Caco-2 (cell line): ENCODE measurements at regions of chr2 and their contacts with region 1.

Region 1: GRCh38 chr2:220057916-220058315 is 430.5 kb downstream of the SLC4A3 start:
- DNase-seq: no peak
- H3K4me3 ChIP-seq: no peak overlapping the region
- H3K4me3 Mint-ChIP-seq: no peak overlapping the region
- H3K27ac Mint-ChIP-seq: no peak overlapping the region
- H3K4me1 ChIP-seq: no peaks in the 10 kb centered on the region
- H3K4me1 Mint-ChIP-seq: peaks cover 4% of the 10 kb centered on the region
- H3K27me3 ChIP-seq: no peaks in the 10 kb centered on the region
- H3K27me3 Mint-ChIP-seq: peaks cover 16% of the 10 kb centered on the region
- CTCF ChIP-seq: no peak

Region 2: GRCh38 chr2:220025207-220025606 is 32.7 kb before region 1 on chr2:
- CTCF ChIA-PET with region 1: no interaction called
- POLR2A ChIA-PET with region 1: no interaction called
- intact Hi-C with region 1: no loop called
- DNase-seq: no peak
- H3K4me3 ChIP-seq: no peak overlapping the region
- H3K4me3 Mint-ChIP-seq: no peak overlapping the region
- H3K27ac Mint-ChIP-seq: no peak overlapping the region
- H3K4me1 ChIP-seq: no peaks in the 10 kb centered on the region
- H3K4me1 Mint-ChIP-seq: no peaks in the 10 kb centered on the region
- H3K27me3 ChIP-seq: no peaks in the 10 kb centered on the region; the same call in 1 of the 2 replicates
- H3K27me3 Mint-ChIP-seq: no peaks in the 10 kb centered on the region
- CTCF ChIP-seq: no peak

Region 3: DNA sequence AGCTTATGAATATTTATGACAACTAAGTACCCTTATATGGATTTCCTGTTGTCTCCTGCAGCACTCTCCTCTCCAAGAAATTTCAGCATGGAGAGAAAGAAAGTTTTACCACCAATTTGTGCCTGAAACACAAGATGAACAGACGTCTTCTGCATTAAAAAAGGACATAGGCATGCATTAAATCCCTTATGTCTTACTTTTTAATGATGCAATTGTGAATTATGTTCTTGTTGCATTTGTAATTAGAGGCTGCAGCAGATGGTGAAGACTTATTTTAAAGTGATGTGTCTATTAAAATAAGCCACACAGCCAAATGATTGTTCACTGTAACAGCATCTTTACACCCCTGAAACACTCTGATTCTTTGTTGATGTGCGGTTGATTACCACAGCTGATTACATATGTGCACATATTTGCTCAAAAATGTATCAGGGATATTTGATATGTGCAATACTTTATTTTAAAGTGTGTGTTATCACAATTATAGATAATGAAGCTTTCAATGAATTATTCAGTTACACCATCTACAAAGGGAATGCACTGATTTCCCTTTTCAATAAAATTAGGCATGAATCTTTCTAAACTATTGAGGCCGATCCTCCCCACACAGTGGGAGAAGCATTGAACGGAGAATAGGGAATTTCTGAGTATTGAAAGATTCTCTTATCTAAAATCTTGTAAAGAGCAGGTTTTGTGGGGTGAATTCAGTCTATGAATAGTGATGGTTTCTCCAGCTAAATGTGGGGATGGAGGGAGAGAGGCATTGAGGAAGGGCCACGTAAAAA is 154.6 kb after region 1 on chr2:
- CTCF ChIA-PET with region 1: no interaction called
- POLR2A ChIA-PET with region 1: no interaction called
- intact Hi-C with region 1: loop called (anchors 5 kb)
- DNase-seq: no peak
- H3K4me3 ChIP-seq: no peak overlapping the region
- H3K4me3 Mint-ChIP-seq: no peak overlapping the region
- H3K27ac Mint-ChIP-seq: no peak overlapping the region
- H3K4me1 ChIP-seq: no peaks in the 10 kb centered on the region
- H3K4me1 Mint-ChIP-seq: no peaks in the 10 kb centered on the region
- H3K27me3 ChIP-seq: no peaks in the 10 kb centered on the region
- H3K27me3 Mint-ChIP-seq: peaks cover 17% of the 10 kb centered on the region
- CTCF ChIP-seq: no peak